CD4-positive, alpha-beta T cell (primary cell): ENCODE measurements at regions of chr6 and their contacts with region 1.

Region 1: GRCh38 chr6:2988426-2989331 is 11.0 kb upstream of the NQO2 start:
- DNase-seq: peak; percentile 59 to 90 (median 74)
- ATAC-seq: peak; percentile 63
- H3K4me3 ChIP-seq: peak overlapping the region; percentile 98
- H3K4me3 Mint-ChIP-seq: peak overlapping the region; percentile 97
- H3K27ac ChIP-seq: peak overlapping the region; percentile 92 to 96
- H3K27ac Mint-ChIP-seq: peak overlapping the region; percentile 100
- H3K4me1 ChIP-seq: peaks cover 32% of the 10 kb centered on the region
- H3K4me1 Mint-ChIP-seq: peaks cover 28% of the 10 kb centered on the region
- H3K27me3 ChIP-seq: no peaks in the 10 kb centered on the region
- H3K27me3 Mint-ChIP-seq: no peaks in the 10 kb centered on the region
- CTCF ChIP-seq: peak; percentile 72

Region 2: DNA sequence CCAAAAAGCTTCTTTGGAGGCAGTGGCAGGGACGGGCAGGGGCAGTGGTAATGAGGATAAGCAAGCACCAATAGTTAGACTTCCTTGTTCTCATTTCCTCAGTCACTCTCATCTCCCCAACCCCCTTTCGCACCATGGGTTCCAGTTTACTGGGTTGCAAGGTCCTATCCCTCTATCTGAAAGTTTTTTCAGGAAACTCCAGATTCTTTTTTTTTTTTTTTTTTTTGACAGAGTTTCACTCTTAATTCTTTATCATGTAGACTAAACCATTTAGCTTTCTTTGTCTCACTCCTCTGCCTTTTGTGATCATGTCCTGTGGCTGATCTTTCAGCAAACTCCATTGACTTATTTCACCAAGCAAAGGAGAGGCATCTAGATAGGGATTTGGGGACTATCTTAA is 691.9 kb before region 1 on chr6:
- CTCF ChIA-PET with region 1: no interaction called
- POLR2A ChIA-PET with region 1: no interaction called
- intact Hi-C with region 1: no loop called
- DNase-seq: no peak
- ATAC-seq: no peak
- H3K4me3 ChIP-seq: no peak overlapping the region
- H3K4me3 Mint-ChIP-seq: no peak overlapping the region
- H3K27ac ChIP-seq: no peak overlapping the region
- H3K27ac Mint-ChIP-seq: no peak overlapping the region
- H3K4me1 ChIP-seq: no peaks in the 10 kb centered on the region
- H3K4me1 Mint-ChIP-seq: no peaks in the 10 kb centered on the region
- H3K27me3 ChIP-seq: no peaks in the 10 kb centered on the region
- H3K27me3 Mint-ChIP-seq: no peaks in the 10 kb centered on the region
- CTCF ChIP-seq: no peak

Region 3: GRCh38 chr6:2791124-2791974 is 197.3 kb before region 1 on chr6:
- CTCF ChIA-PET with region 1: no interaction called
- POLR2A ChIA-PET with region 1: interaction called, 5 read pairs
- intact Hi-C with region 1: loop called (anchors 2 to 5 kb)
- DNase-seq: peak; percentile 22 to 76 (median 42)
- ATAC-seq: peak; percentile 86
- H3K4me3 ChIP-seq: no peak overlapping the region
- H3K4me3 Mint-ChIP-seq: peak overlapping the region; percentile 49
- H3K27ac ChIP-seq: no peak overlapping the region
- H3K27ac Mint-ChIP-seq: peak overlapping the region; percentile 70
- H3K4me1 ChIP-seq: peaks cover 22% of the 10 kb centered on the region
- H3K4me1 Mint-ChIP-seq: peaks cover 37% of the 10 kb centered on the region
- H3K27me3 ChIP-seq: no peaks in the 10 kb centered on the region
- H3K27me3 Mint-ChIP-seq: no peaks in the 10 kb centered on the region
- CTCF ChIP-seq: peak; percentile 68

Region 4: DNA sequence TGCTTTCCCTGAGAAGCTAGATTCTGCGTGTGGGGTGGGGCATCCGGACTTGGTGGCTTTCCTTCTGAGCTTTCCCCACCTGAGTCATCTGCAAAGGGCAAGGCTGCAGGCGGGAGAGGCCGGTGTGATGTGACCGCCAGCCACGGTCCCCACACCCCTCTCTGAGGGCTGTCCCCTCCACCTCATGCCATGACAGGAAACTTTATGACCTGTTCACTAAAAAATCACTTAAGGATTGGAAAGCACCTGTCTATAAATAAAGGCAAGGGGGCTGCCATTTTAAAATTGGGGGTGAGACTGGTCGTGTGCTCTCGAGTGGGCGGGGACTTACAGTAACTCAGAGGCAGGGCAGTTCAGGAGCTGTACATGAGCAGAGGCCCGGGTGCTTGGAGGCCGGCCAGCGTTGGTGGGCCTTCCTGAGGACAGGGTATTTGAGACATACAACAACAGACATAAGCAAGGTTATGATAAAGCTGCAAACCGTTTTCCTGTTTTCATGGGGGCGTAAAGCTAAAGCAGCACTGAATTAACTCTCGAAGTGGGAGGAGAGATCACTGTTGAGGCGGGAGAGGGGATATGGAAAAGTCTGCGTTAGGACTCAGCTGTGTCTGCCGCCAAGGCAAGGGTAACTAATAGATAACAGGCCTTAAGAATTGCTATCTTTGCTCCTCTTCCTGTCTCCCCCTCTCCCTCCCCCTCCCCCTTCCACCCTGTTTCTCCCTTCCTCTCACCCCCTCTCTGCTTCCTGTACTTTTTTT is 130.9 kb before region 1 on chr6:
- CTCF ChIA-PET with region 1: interaction called, 4 read pairs
- POLR2A ChIA-PET with region 1: interaction called, 23 read pairs
- intact Hi-C with region 1: no loop called
- DNase-seq: peak in 12 of 14 experiments; percentile 31 to 92 (median 58)
- ATAC-seq: peak; percentile 15
- H3K4me3 ChIP-seq: no peak overlapping the region
- H3K4me3 Mint-ChIP-seq: peak overlapping the region; percentile 81
- H3K27ac ChIP-seq: peak overlapping the region; percentile 91 to 94
- H3K27ac Mint-ChIP-seq: peak overlapping the region; percentile 94
- H3K4me1 ChIP-seq: peaks cover 95% of the 10 kb centered on the region
- H3K4me1 Mint-ChIP-seq: peaks cover 91% of the 10 kb centered on the region
- H3K27me3 ChIP-seq: no peaks in the 10 kb centered on the region
- H3K27me3 Mint-ChIP-seq: no peaks in the 10 kb centered on the region
- CTCF ChIP-seq: no peak

Region 5: DNA sequence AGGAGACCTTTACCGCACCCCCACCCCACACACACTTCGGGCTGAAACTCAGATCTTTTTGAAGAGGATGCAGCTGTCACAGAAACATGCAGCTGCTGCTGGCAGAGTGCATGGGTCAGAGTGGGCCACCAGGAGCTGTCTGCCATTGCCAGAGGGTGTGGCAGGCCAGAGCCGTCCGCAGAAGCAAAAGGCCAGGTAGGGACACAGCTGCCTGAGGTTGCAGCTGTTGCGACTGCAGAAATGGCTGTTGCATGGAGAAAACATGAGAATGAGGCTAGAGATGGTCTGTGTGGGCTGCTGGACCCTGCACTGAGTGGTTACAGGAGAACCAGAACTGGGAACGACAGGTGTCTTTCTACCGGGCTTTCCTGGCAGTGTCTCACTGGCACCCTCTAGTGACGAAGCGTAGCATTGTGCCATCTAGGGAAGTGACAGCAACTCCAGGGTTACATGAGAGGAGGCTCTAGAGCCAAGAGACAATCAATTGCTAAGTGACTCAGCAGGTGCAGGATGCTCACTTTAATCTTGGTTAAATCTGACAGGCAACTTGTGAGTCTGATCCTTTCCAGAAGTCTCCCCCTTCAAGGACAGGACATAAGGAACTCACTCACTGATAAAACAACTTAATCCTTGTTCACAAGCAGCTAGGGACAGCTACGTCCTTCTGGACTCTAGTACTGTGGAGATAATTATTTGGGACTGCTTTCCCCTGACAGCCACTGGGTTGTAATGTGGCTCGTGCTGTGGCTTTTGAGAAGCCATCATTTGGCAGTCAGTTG is 56.5 kb before region 1 on chr6:
- CTCF ChIA-PET with region 1: interaction called, 6 read pairs
- POLR2A ChIA-PET with region 1: interaction called, 19 read pairs
- intact Hi-C with region 1: loop called in 1 of 2 experiments (anchors 2 kb)
- DNase-seq: peak; percentile 77 to 93 (median 86)
- ATAC-seq: peak; percentile 98
- H3K4me3 ChIP-seq: no peak overlapping the region
- H3K4me3 Mint-ChIP-seq: peak overlapping the region; percentile 0
- H3K27ac ChIP-seq: no peak overlapping the region
- H3K27ac Mint-ChIP-seq: no peak overlapping the region
- H3K4me1 ChIP-seq: peaks cover 16% of the 10 kb centered on the region
- H3K4me1 Mint-ChIP-seq: peaks cover 18% of the 10 kb centered on the region
- H3K27me3 ChIP-seq: no peaks in the 10 kb centered on the region
- H3K27me3 Mint-ChIP-seq: no peaks in the 10 kb centered on the region
- CTCF ChIP-seq: peak; percentile 96

Region 6: GRCh38 chr6:2976571-2977085 is 12.1 kb before region 1 on chr6:
- CTCF ChIA-PET with region 1: interaction called, 6 read pairs
- POLR2A ChIA-PET with region 1: interaction called, 30 read pairs
- intact Hi-C with region 1: loop called (anchors 1 to 2 kb)
- DNase-seq: no peak
- ATAC-seq: no peak
- H3K4me3 ChIP-seq: no peak overlapping the region
- H3K4me3 Mint-ChIP-seq: no peak overlapping the region
- H3K27ac ChIP-seq: no peak overlapping the region
- H3K27ac Mint-ChIP-seq: no peak overlapping the region
- H3K4me1 ChIP-seq: peaks cover 6% of the 10 kb centered on the region
- H3K4me1 Mint-ChIP-seq: peaks cover 21% of the 10 kb centered on the region
- H3K27me3 ChIP-seq: peaks cover 0 to 4% of the 10 kb centered on the region in 2 experiments
- H3K27me3 Mint-ChIP-seq: peaks cover 58% of the 10 kb centered on the region
- CTCF ChIP-seq: no peak

Region 7: GRCh38 chr6:3068329-3069214 is 79.9 kb after region 1 on chr6 and contains the start of gene RIPK1:
- CTCF ChIA-PET with region 1: interaction called, 6 read pairs
- POLR2A ChIA-PET with region 1: interaction called, 93 read pairs
- intact Hi-C with region 1: no loop called
- DNase-seq: peak; percentile 87 to 97 (median 94)
- ATAC-seq: peak; percentile 73
- H3K4me3 ChIP-seq: peak within 1 kb of the TSS; percentile 84
- H3K4me3 Mint-ChIP-seq: peak within 1 kb of the TSS; percentile 99
- H3K27ac ChIP-seq: peak within 1 kb of the TSS; percentile 88 to 94
- H3K27ac Mint-ChIP-seq: peak within 1 kb of the TSS; percentile 99
- H3K4me1 ChIP-seq: peaks cover 44% of the 10 kb centered on the region
- H3K4me1 Mint-ChIP-seq: peaks cover 74% of the 10 kb centered on the region
- H3K27me3 ChIP-seq: no peaks in the 10 kb centered on the region
- H3K27me3 Mint-ChIP-seq: no peaks in the 10 kb centered on the region
- CTCF ChIP-seq: peak; percentile 40
- total RNA-seq, gene RIPK1: 17.2 to 17.3 TPM

Region 8: GRCh38 chr6:3258720-3259490 is 270.2 kb after region 1 on chr6 and contains the start of gene PSMG4:
- CTCF ChIA-PET with region 1: no interaction called
- POLR2A ChIA-PET with region 1: interaction called, 10 read pairs
- intact Hi-C with region 1: no loop called
- DNase-seq: peak; percentile 83 to 96 (median 92)
- ATAC-seq: peak; percentile 74
- H3K4me3 ChIP-seq: peak within 1 kb of the TSS; percentile 80
- H3K4me3 Mint-ChIP-seq: peak within 1 kb of the TSS; percentile 96
- H3K27ac ChIP-seq: peak within 1 kb of the TSS in 1 of 2 donors; percentile 50
- H3K27ac Mint-ChIP-seq: peak within 1 kb of the TSS; percentile 92
- H3K4me1 ChIP-seq: peaks cover 45% of the 10 kb centered on the region
- H3K4me1 Mint-ChIP-seq: peaks cover 42% of the 10 kb centered on the region
- H3K27me3 ChIP-seq: no peaks in the 10 kb centered on the region
- H3K27me3 Mint-ChIP-seq: no peaks in the 10 kb centered on the region
- CTCF ChIP-seq: no peak
- total RNA-seq, gene PSMG4: 12.3 to 12.8 TPM